Activated CD8-positive, alpha-beta T cell treated with anti-CD3 and anti-CD28 coated beads, Interleukin-2, amount 10 ng/mL, durations not matched to agents 7 days and 5 days (primary cell): ENCODE measurements at regions of chr12 and their contacts with region 1.

Region 1: GRCh38 chr12:14365294-14366208 is at the start of gene ATF7IP:
- DNase-seq: peak; percentile 98
- ATAC-seq: peak; percentile 89
- H3K4me3 Mint-ChIP-seq: peak within 1 kb of the TSS; percentile 82
- H3K27ac Mint-ChIP-seq: peak within 1 kb of the TSS; percentile 96
- H3K4me1 Mint-ChIP-seq: peaks cover 28% of the 10 kb centered on the region
- H3K27me3 Mint-ChIP-seq: no peaks in the 10 kb centered on the region
- total RNA-seq, gene ATF7IP: 99.8 to 104 TPM

Region 2: DNA sequence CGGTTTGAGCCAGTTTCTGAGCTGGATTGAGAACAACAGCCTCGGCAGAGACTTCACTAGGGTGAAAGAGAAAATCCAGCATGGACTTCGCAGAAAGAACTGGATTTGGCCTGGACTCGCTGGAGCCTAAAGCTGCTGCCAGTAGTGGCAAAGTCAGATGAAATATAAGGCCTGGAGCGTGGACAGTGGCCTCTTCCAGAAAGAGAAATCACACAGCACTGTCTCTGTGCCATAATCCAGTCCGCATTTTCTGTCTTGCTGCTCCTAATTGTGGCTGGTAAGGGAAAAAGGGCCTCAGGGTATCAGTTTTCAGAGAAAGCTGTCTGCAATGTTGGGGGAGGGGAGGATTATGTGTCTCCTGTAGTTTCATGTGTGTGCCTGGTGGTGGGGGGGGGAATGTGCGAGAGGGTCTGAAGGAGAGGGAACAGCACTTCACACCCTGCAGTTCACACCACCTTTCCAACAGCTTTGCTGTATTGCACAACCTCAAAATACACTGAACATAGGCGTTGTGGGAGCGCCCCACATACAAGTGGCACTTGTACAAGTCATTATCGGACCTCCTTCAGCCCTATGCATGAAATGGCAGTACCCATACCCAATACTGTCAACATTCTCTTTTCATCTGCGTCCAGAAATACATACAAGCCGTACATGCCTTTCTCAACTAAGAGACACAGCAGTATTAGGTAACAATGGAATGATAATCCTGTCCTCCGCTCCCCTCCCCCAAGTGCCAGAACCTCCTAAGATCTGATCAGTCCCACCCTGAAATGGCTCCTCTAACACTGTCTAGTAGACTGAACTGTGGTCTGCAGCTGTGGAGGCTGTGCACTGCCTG is 107.6 kb before region 1 on chr12:
- CTCF ChIA-PET with region 1: interaction called, 36 read pairs
- POLR2A ChIA-PET with region 1: interaction called, 29 read pairs
- DNase-seq: peak; percentile 87
- ATAC-seq: peak; percentile 67
- H3K4me3 Mint-ChIP-seq: peak overlapping the region; percentile 29
- H3K27ac Mint-ChIP-seq: peak overlapping the region; percentile 99
- H3K4me1 Mint-ChIP-seq: peaks cover 54% of the 10 kb centered on the region
- H3K27me3 Mint-ChIP-seq: no peaks in the 10 kb centered on the region

Region 3: GRCh38 chr12:14394317-14395073 is 28.9 kb after region 1 on chr12:
- CTCF ChIA-PET with region 1: interaction called, 77 read pairs
- POLR2A ChIA-PET with region 1: interaction called, 32 read pairs
- DNase-seq: peak; percentile 67
- ATAC-seq: peak; percentile 78
- H3K4me3 Mint-ChIP-seq: peak overlapping the region; percentile 83
- H3K27ac Mint-ChIP-seq: peak overlapping the region; percentile 92
- H3K4me1 Mint-ChIP-seq: peaks cover 79% of the 10 kb centered on the region
- H3K27me3 Mint-ChIP-seq: no peaks in the 10 kb centered on the region

Region 4: DNA sequence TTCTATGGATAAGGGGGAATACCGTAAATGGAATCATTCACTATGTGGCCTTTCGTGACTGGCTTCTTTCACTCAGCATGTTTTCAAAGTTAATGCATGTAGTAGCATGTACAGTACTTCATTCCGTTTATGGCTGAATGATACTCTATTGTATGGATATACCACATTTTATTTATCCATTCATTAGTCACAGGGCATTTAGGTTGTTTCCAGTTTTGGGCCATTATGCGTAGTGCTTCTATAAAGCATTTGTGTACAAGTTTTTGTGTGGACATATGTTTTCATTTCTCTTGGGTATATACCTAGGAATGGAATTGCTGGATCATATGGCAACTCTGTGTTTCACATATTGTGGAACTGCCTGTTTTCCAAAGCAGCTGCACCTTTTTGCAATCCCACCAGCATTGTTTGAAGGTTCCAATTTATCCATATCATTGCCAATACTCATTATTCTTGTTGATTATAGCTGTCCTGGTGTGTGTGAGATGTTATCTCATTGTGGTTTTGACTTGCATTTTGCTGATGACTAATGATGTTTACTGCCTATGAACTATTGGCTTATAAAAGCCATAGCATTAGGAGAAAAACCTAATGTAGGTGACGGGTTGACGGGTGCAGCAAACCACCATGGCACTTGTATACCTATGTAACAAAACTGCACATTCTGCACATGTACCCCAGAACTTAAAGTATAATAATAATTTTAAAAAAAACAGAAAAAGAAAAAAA is 45.5 kb after region 1 on chr12:
- CTCF ChIA-PET with region 1: interaction called, 49 read pairs
- POLR2A ChIA-PET with region 1: interaction called, 14 read pairs
- DNase-seq: peak; percentile 47
- ATAC-seq: peak; percentile 84
- H3K4me3 Mint-ChIP-seq: peak overlapping the region; percentile 4
- H3K27ac Mint-ChIP-seq: peak overlapping the region; percentile 13
- H3K4me1 Mint-ChIP-seq: peaks cover 65% of the 10 kb centered on the region
- H3K27me3 Mint-ChIP-seq: no peaks in the 10 kb centered on the region

Region 5: DNA sequence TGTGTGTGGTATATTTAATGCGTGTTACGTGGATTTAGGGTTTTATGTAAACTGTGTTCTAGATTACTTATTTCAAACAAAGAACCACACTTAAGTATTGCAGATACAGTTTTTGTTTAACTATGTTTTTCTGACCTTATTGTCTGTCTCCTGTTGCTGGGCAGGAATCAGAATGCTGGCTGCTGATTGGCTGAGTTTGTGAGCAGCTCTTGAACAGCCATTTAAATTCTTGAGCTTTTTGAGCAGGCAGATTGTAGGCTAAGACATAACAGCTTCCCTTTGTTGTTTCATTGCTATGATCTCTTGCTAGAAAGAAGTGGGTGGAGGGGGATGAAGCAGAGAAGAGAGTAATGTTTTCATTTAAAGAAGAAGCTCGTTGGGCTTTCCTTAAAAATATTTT is 52.2 kb after region 1 on chr12:
- CTCF ChIA-PET with region 1: interaction called, 49 read pairs
- POLR2A ChIA-PET with region 1: interaction called, 19 read pairs
- DNase-seq: peak; percentile 85
- ATAC-seq: peak; percentile 76
- H3K4me3 Mint-ChIP-seq: peak overlapping the region; percentile 72
- H3K27ac Mint-ChIP-seq: peak overlapping the region; percentile 91
- H3K4me1 Mint-ChIP-seq: peaks cover 60% of the 10 kb centered on the region
- H3K27me3 Mint-ChIP-seq: no peaks in the 10 kb centered on the region

Region 6: DNA sequence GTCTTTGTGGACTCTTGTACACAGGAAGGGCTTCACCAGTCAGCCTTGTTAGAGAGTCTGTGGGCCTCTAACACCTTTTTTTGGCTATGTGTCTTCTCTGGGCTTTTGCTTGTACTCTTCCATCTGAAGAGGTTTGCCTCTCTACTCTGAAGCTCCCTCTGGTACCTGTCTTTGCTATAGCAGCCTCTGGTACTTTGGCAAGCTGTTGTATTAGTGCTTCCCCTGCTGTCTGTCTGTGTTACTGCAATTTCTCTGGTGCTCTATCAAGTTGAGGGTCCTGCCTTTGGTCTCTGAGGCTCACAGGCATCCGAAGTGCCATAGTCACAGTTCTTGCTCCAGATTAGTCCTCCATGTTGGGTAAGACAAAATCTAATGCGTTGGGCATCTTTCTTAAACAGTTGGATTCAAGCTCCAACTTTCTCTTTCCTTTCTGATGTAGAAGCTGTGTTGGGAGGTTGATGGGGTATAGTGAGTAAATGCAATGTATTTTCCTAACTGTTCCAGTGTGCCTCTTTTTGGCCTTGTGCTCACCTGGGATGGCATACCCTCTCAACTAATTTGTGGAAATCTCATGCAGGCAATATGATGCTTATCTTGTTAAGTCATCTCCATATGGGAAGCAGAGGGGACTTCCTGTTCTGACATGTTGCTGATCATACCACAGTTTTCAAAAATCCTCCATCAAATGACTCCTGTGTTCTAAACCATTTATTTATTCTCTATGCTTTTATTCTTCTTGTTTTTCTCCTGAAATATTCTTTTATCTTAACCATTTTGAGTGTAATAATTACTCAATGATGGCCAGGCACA is 88.8 kb after region 1 on chr12:
- CTCF ChIA-PET with region 1: interaction called, 30 read pairs
- POLR2A ChIA-PET with region 1: interaction called, 14 read pairs
- DNase-seq: peak; percentile 59
- ATAC-seq: peak; percentile 84
- H3K4me3 Mint-ChIP-seq: no peak overlapping the region
- H3K27ac Mint-ChIP-seq: peak overlapping the region; percentile 74
- H3K4me1 Mint-ChIP-seq: peaks cover 42% of the 10 kb centered on the region
- H3K27me3 Mint-ChIP-seq: no peaks in the 10 kb centered on the region